ENCODE measurements at regions of chr13 and their contacts with region 1.

Region 1: DNA sequence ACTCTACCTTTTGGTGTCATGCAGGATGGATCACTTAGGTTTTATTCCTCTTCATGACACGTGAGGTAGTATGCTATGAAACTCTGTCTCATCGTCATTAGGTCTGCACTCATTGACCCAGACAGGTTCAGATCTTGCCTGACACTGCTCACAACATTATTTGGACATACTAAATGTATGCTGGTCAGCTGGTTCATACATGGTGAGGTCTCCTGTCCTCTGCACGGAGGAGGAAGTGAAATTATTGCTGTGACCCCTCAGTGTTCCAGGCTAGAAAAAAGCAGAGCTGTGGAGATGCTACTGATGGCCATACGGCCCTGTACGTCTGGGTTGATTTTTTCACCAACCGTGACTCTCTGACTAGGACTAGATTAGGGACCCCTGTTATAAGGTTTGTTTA is 35.8 kb downstream of the LATS2 start:
- DNase-seq: no peak
- H3K4me3 ChIP-seq: no peak overlapping the region
- H3K27ac ChIP-seq: no peak overlapping the region
- H3K4me1 ChIP-seq: no peaks in the 10 kb centered on the region
- H3K27me3 ChIP-seq: no peaks in the 10 kb centered on the region
- CTCF ChIP-seq: no peak
- POLR2A ChIP-seq: no peak

Region 2: GRCh38 chr13:20435616-20436368 is 589.7 kb before region 1 on chr13:
- intact Hi-C with region 1: loop called (anchors 5 kb)
- DNase-seq: no peak
- H3K4me3 ChIP-seq: no peak overlapping the region
- H3K27ac ChIP-seq: no peak overlapping the region
- H3K4me1 ChIP-seq: no peaks in the 10 kb centered on the region
- H3K27me3 ChIP-seq: no peaks in the 10 kb centered on the region
- CTCF ChIP-seq: no peak
- POLR2A ChIP-seq: no peak

Region 3: DNA sequence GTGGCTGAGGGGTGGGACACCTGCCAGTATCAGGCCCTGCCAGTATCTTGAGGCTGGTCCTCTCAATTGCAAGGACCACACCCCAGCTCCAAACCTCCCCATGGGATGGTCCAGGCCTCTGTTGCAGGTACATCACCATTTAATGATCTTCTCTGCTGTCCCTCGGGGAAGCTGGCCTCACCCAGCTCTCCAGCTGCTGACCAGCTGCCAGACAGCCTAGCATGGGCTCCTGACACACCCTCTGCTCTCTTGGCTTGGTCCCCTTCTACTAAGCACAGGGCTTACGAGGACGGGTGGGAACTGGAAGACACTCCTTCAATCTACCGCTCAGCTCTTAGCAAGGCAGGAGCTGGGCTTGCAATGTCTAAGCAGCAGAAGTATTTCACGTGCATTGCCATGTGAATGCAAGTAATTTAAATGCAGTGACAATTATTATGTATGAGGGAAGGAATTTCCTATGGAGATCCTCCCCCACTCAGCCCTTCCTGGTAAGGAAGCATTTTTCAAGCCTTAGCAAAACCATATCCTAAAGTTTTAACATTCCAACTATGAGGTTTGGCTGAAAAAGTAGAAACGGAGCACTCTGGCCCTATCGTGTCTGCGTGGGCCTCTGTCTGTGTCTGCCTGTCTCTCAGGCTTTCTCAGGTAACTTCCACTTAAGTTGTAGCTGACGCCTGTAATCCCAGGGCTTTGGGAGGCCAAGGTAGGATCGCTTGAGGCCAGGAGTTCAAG is 27.9 kb before region 1 on chr13:
- intact Hi-C with region 1: no loop called
- DNase-seq: no peak
- H3K4me3 ChIP-seq: no peak overlapping the region
- H3K27ac ChIP-seq: peak overlapping the region; percentile 7 to 34
- H3K4me1 ChIP-seq: no peaks in the 10 kb centered on the region
- H3K27me3 ChIP-seq: no peaks in the 10 kb centered on the region
- CTCF ChIP-seq: no peak
- POLR2A ChIP-seq: no peak

Region 4: DNA sequence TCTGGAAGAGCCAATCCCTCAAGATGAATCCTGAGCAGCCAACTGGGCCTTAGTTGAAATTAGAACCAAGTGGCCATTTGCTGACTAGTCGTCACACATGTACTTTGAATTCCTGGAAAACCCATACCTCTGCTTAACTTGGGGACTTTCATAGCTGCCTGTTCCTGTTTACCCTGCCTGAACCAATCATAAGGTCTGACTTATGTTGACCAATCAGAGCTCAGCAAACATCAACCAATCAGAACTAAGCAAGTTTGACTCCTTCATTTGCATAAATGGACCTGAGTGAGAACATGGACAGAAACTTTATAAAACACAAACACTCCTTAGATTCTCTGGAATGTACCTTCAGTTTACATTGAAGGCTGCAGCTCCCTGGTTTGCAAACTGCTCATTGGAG is 14.9 kb before region 1 on chr13:
- intact Hi-C with region 1: no loop called
- DNase-seq: no peak
- H3K4me3 ChIP-seq: no peak overlapping the region
- H3K27ac ChIP-seq: no peak overlapping the region
- H3K4me1 ChIP-seq: no peaks in the 10 kb centered on the region
- H3K27me3 ChIP-seq: no peaks in the 10 kb centered on the region
- CTCF ChIP-seq: no peak
- POLR2A ChIP-seq: no peak

Measured in breast epithelium (tissue), 4 donors.